ENCODE measurements at regions of chr4 and their contacts with region 1.

Region 1: DNA sequence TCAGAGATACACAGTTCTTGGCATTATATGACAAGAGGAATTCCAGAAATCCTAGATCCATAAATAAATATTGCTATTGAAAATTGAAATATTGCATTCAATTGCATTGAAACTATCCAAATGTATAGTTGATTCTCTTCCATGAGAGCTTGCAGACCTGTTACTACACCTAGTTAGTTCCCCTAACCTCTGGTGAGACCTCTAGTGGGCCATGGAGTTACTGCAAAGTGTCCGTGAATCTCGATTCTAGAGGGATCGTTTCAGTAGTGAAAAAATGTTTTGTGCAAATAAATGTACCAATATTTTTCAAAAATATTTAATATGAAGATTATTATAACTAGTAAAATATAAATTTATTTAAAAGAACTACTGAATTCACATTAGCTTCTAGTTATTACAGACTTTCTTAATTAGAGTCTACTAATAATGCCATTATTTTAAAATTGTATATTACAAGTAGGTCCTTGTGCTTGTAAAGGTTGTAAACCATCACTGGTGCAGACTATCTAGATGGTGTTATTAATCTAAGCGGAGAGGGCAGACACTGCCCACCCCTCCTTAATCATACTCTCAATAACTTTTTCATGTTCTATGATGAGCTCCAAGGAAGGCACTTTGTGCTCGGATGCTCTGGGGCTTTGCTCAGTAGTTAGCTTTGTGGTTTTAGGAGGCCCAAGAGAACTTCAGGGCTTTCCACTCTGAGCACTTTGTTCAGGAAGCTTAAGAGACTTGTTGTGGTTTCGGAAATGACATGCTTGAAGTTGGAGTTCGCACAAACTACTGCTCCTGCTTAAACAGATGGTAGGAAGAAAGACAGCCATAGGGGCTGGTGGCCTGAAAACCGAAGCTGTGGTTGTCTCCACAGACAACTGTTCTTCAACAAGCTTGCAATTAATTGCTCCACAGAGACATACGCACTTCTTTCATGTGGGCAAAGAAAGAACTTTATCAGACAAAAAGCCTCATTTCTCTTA is 42.8 kb downstream of the IL21 start:
- DNase-seq: peak; percentile 78
- H3K4me3 Mint-ChIP-seq: no peak overlapping the region
- H3K27ac Mint-ChIP-seq: no peak overlapping the region
- H3K4me1 Mint-ChIP-seq: peaks cover 7% of the 10 kb centered on the region
- H3K27me3 Mint-ChIP-seq: peaks cover 10% of the 10 kb centered on the region
- CTCF ChIP-seq: peak; percentile 60

Region 2: DNA sequence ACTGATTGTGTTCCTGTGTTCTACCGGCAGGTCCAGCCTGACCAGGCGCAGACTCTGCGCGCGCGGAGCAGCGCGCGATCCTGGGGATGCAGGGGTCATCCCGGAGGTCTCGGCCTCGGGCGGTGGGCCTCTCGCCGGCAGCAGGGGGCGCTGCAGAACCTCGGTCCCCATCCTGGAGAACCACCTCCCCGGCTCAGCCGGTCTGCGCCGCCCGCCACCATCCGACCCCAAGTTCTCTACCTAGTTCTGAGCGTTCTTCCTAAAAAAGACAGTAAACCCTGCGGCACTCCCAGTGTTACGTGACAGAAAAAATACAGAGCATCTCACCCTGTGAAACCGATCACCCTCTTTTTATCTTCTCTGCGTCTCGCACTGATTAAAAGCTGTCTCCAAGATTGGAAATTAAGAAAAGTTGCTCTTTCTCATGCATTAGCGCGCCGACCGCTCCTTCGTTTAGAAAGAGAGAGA is 627.8 kb before region 1 on chr4:
- CTCF ChIA-PET with region 1: interaction called, 4 read pairs
- POLR2A ChIA-PET with region 1: no interaction called
- intact Hi-C with region 1: loop called (anchors 1 kb)
- DNase-seq: peak; percentile 44
- H3K4me3 Mint-ChIP-seq: peak overlapping the region; percentile 69
- H3K27ac Mint-ChIP-seq: no peak overlapping the region
- H3K4me1 Mint-ChIP-seq: no peaks in the 10 kb centered on the region
- H3K27me3 Mint-ChIP-seq: peaks cover 39% of the 10 kb centered on the region
- CTCF ChIP-seq: peak; percentile 63

Region 3: GRCh38 chr4:122309988-122310626 is 268.0 kb before region 1 on chr4:
- CTCF ChIA-PET with region 1: interaction called, 17 read pairs
- POLR2A ChIA-PET with region 1: no interaction called
- intact Hi-C with region 1: loop called (anchors 1 kb)
- DNase-seq: peak; percentile 9
- H3K4me3 Mint-ChIP-seq: no peak overlapping the region
- H3K27ac Mint-ChIP-seq: no peak overlapping the region
- H3K4me1 Mint-ChIP-seq: no peaks in the 10 kb centered on the region
- H3K27me3 Mint-ChIP-seq: no peaks in the 10 kb centered on the region
- CTCF ChIP-seq: peak; percentile 48

Region 4: DNA sequence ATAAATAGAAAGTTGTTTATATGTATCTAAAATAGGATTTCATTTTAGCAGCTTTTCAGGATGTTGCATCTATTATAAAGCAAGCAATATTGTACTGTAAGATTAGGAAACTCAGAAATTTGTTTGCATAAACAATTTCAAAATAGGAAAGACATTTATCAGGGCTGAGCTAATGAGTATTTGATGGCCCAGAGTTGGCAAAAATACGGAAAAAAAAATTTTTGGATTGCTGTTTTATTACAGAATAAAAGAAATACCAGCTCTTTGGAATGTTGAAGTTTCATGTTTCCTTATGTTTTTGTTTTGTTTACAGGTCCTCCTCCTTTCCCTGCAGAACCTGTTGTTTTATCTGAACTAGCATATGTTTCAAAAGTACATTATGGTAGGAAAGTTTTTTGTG is 184.8 kb before region 1 on chr4:
- CTCF ChIA-PET with region 1: no interaction called
- POLR2A ChIA-PET with region 1: no interaction called
- intact Hi-C with region 1: no loop called
- DNase-seq: no peak
- H3K4me3 Mint-ChIP-seq: no peak overlapping the region
- H3K27ac Mint-ChIP-seq: no peak overlapping the region
- H3K4me1 Mint-ChIP-seq: no peaks in the 10 kb centered on the region
- H3K27me3 Mint-ChIP-seq: no peaks in the 10 kb centered on the region
- CTCF ChIP-seq: no peak

Region 5: DNA sequence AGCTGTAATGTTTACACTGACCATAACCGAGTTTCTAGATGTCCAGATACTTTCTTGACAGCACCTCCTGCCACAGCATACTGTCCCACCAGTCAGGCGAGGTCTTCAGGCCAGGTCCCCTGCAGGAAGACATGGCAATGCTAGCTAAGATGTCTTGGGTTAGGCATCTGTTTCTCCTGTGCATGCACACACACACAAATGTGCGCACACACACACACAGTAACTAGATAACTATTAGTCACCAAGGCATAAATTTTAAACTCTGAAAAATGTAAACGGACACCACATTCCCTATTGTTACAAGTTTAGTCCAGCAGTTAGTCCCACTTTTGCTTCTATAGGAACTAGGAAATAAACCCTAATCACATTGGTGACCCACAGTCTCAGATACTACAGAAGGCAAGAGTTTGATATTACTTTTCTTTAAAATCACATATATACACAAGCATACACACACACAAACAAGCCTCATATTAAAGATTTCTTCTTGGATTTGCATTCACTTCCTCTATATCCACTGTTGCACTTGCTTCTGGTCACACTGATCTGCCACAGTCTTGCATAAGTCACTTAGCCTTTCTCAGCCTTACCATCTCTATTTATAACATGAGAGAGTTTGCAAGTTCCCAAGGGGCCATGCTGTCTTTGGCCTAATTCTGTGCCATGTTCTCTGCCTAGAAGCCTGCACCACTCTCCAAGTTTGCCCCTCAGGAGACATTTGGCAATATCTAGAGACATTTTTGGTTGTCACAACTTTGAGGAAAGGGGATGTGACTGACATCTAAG is 10.6 kb after region 1 on chr4:
- CTCF ChIA-PET with region 1: interaction called, 16 read pairs
- POLR2A ChIA-PET with region 1: no interaction called
- intact Hi-C with region 1: no loop called
- DNase-seq: peak; percentile 24
- H3K4me3 Mint-ChIP-seq: no peak overlapping the region
- H3K27ac Mint-ChIP-seq: no peak overlapping the region
- H3K4me1 Mint-ChIP-seq: peaks cover 19% of the 10 kb centered on the region
- H3K27me3 Mint-ChIP-seq: no peaks in the 10 kb centered on the region
- CTCF ChIP-seq: no peak

Region 6: GRCh38 chr4:122930862-122931261 is 352.8 kb after region 1 on chr4:
- CTCF ChIA-PET with region 1: interaction called, 11 read pairs
- POLR2A ChIA-PET with region 1: no interaction called
- intact Hi-C with region 1: no loop called
- DNase-seq: peak; percentile 13
- H3K4me3 Mint-ChIP-seq: no peak overlapping the region
- H3K27ac Mint-ChIP-seq: no peak overlapping the region
- H3K4me1 Mint-ChIP-seq: no peaks in the 10 kb centered on the region
- H3K27me3 Mint-ChIP-seq: no peaks in the 10 kb centered on the region
- CTCF ChIP-seq: peak; percentile 51